ENCODE measurements at regions of chr1 and their contacts with region 1.

Region 1: GRCh38 chr1:37978541-37978940 is 11.3 kb downstream of the SF3A3 start:
- DNase-seq: no peak
- H3K4me3 ChIP-seq: no peak overlapping the region
- CTCF ChIP-seq: no peak

Region 2: GRCh38 chr1:37883671-37884070 is 94.9 kb before region 1 on chr1:
- CTCF ChIA-PET with region 1: interaction called, 22 read pairs
- POLR2A ChIA-PET with region 1: no interaction called
- DNase-seq: no peak
- H3K4me3 ChIP-seq: no peak overlapping the region
- CTCF ChIP-seq: no peak

Region 3: DNA sequence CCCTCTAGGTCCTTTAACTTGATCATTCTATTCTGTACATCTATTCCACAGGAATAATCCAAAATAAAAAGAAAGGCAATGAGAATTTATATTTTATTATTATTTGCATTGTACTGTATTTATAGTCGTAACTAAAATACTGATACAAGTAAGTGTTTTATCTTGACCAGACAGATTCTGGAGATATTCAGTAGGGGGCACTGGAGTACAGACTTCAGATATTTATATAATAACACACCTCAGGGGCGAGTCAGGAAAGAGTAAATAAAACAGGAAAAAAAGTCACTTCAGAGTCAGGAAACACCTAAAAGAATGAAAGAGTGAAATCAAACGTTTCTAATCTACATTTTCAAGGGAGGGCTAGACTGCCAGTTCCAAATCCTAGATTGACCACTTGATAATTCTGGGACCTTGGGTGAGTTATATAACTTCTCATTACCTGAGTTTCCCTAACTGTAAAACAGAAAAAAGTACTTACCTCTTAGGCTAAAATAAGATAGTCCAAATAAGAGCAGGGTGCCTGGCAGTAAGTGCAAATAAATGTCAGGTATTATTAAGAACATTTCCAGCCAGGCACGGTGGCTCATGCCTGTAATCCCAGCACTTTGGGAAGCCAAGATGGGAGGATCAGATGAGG is 88.0 kb before region 1 on chr1:
- CTCF ChIA-PET with region 1: interaction called, 22 read pairs
- POLR2A ChIA-PET with region 1: no interaction called
- DNase-seq: peak; percentile 4
- H3K4me3 ChIP-seq: no peak overlapping the region
- CTCF ChIP-seq: no peak

Region 4: DNA sequence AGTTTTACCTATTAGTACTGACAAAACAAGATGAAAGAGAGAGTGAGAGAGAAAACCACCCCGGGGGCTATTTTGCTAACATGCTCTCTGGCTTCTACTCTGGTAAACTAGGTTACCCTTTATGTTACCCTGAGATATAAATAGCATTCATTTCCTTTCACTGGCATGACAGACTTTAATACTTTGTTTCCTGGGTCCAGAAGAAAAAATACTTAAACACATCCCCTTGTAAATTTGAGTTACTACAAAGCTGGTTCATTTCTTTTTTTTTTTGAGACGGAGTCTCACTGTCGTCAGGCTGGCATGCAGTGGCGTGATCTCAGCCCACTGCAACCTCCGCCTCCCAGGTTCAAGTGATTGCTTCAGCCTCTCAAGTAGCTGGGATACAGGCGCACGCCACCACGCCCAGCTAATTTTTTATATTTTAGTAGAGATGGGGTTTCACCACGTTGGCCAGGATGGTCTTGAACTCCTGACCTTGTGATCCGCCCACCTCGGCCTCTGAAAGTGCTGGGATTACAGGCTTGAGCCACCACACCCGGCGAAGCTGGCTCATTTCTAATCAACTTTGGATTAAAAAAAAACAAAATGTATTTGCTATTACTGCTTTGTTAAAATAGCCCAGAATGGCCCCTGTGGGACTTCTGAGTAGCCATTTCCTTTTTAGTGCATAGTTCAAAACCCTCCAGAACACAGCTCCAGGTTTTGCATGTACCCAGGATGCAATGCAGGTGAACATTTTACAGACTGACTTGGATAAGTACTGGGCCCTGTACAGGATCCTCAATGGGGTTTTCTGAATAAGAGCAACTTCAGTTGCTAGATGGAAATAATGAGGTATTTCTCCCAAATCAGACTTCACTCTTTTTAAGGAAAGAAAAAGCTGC is 52.3 kb before region 1 on chr1:
- CTCF ChIA-PET with region 1: interaction called, 10 read pairs
- POLR2A ChIA-PET with region 1: no interaction called
- DNase-seq: no peak
- H3K4me3 ChIP-seq: no peak overlapping the region
- CTCF ChIP-seq: no peak

Region 5: GRCh38 chr1:37958690-37959089 is 19.9 kb before region 1 on chr1:
- CTCF ChIA-PET with region 1: interaction called, 14 read pairs
- POLR2A ChIA-PET with region 1: no interaction called
- DNase-seq: peak; percentile 90
- H3K4me3 ChIP-seq: no peak overlapping the region
- CTCF ChIP-seq: no peak

Region 6: DNA sequence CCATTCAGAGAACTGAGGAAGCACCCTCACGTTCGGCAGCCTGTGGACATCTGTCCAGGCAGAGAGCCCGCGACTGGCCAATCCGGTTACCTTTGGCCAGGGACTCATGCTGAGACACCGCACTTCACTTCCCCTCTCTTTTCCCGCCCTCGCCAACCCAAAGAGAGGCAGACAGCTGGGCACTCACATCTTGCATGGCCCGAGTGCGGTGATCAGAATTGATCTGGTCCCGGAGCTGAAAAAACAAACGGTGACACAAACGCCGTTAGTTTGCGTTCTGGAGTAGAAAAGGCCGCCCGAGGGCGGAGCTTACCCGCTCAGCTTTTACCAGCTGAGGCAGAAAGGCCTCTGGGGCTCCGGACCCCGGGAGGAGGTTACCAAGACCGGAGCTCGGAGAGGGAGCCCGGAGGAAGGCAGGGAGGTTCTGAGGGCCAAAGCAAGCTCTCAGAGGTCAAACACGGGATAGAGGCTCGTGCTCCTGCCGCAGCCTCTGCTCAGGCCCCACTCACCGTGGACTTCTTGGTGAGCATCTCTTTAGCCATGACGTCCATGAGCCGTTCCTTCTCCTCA is 10.9 kb after region 1 on chr1:
- CTCF ChIA-PET with region 1: interaction called, 22 read pairs
- POLR2A ChIA-PET with region 1: no interaction called
- DNase-seq: no peak
- H3K4me3 ChIP-seq: peak overlapping the region; percentile 100
- CTCF ChIP-seq: no peak